ENCODE measurements at regions of chr10 and their contacts with region 1.

Region 1: GRCh38 chr10:114304017-114304570 is 65.0 kb downstream of the VWA2 start:
- DNase-seq: peak; percentile 90
- H3K4me3 ChIP-seq: peak overlapping the region; percentile 23
- H3K27ac ChIP-seq: peak overlapping the region; percentile 33
- H3K4me1 ChIP-seq: no peaks in the 10 kb centered on the region
- H3K27me3 ChIP-seq: no peaks in the 10 kb centered on the region
- CTCF ChIP-seq: peak; percentile 68

Region 2: GRCh38 chr10:114437456-114438292 is 133.6 kb after region 1 on chr10:
- intact Hi-C with region 1: loop called (anchors 5 kb)
- DNase-seq: no peak
- H3K4me3 ChIP-seq: no peak overlapping the region
- H3K27ac ChIP-seq: no peak overlapping the region
- H3K4me1 ChIP-seq: no peaks in the 10 kb centered on the region
- H3K27me3 ChIP-seq: no peaks in the 10 kb centered on the region
- CTCF ChIP-seq: peak; percentile 34

Region 3: GRCh38 chr10:114458955-114459354 is 154.9 kb after region 1 on chr10:
- intact Hi-C with region 1: loop called (anchors 5 kb)
- DNase-seq: peak; percentile 64
- H3K4me3 ChIP-seq: no peak overlapping the region
- H3K27ac ChIP-seq: no peak overlapping the region
- H3K4me1 ChIP-seq: no peaks in the 10 kb centered on the region
- H3K27me3 ChIP-seq: no peaks in the 10 kb centered on the region
- CTCF ChIP-seq: peak; percentile 38

Region 4: DNA sequence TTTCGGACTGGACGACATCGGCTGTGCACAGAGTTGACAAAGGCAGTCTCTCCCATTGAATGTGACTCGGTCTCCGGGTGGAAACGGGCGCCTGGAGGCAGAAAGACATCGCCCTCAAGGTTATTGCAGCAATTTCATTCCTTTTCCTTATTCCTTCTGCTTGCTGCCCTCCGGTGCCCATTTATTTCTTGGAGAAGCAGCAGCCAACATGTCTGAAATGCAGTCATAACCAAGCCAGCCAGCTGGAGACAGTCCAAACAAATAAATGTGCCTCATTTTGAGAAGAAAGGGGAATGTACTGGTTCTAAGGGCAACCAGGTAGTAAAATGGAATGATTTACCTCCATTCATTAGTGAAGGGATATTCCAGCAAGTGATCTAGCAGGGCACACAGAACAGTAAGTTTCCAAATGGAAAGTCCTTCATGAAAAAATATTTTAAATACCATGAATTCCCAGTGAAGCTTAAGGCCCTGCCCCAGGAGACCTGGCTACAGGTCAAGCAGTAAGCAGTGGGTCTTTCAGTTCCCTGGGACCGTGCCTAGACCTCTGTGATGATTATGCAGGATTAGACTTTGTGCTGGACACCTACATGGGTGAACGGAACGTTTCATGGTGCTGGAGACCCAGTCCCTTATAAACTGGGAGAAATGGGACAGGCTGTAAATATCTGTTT is 267.4 kb after region 1 on chr10:
- intact Hi-C with region 1: no loop called
- DNase-seq: peak; percentile 72
- H3K4me3 ChIP-seq: no peak overlapping the region
- H3K27ac ChIP-seq: peak overlapping the region; percentile 20
- H3K4me1 ChIP-seq: no peaks in the 10 kb centered on the region
- H3K27me3 ChIP-seq: no peaks in the 10 kb centered on the region
- CTCF ChIP-seq: no peak

Measured in colonic mucosa (tissue), 4 donors.